PC-9 (cell line): ENCODE measurements at regions of chr22 and their contacts with region 1.

Region 1: GRCh38 chr22:36052505-36053270 is 24.1 kb upstream of the RBFOX2 start:
- DNase-seq: peak; percentile 84 to 99
- H3K4me3 ChIP-seq: peak overlapping the region; percentile 52
- H3K27ac ChIP-seq: peak overlapping the region; percentile 99
- H3K4me1 ChIP-seq: peaks cover 92% of the 10 kb centered on the region
- H3K27me3 ChIP-seq: no peaks in the 10 kb centered on the region
- CTCF ChIP-seq: no peak

Region 2: GRCh38 chr22:35367301-35367886 is 685.3 kb before region 1 on chr22:
- CTCF ChIA-PET with region 1: no interaction called
- POLR2A ChIA-PET with region 1: interaction called, 25 read pairs
- intact Hi-C with region 1: loop called (anchors 10 kb)
- DNase-seq: no peak
- H3K4me3 ChIP-seq: no peak overlapping the region
- H3K27ac ChIP-seq: no peak overlapping the region
- H3K4me1 ChIP-seq: peaks cover 50% of the 10 kb centered on the region
- H3K27me3 ChIP-seq: no peaks in the 10 kb centered on the region
- CTCF ChIP-seq: no peak

Region 3: GRCh38 chr22:35648066-35649025 is 404.3 kb before region 1 on chr22 and contains the start of gene APOL6:
- CTCF ChIA-PET with region 1: no interaction called
- POLR2A ChIA-PET with region 1: no interaction called
- intact Hi-C with region 1: no loop called
- DNase-seq: peak; percentile 48 to 88
- H3K4me3 ChIP-seq: peak within 1 kb of the TSS; percentile 80
- H3K27ac ChIP-seq: peak within 1 kb of the TSS; percentile 97
- H3K4me1 ChIP-seq: peaks cover 49% of the 10 kb centered on the region
- H3K27me3 ChIP-seq: no peaks in the 10 kb centered on the region
- CTCF ChIP-seq: no peak
- total RNA-seq, gene APOL6: 16.7 and 18.6 TPM in 2 replicates

Region 4: GRCh38 chr22:35971456-35972119 is 81.1 kb before region 1 on chr22:
- CTCF ChIA-PET with region 1: no interaction called
- POLR2A ChIA-PET with region 1: interaction called, 14 read pairs
- intact Hi-C with region 1: no loop called
- DNase-seq: no peak
- H3K4me3 ChIP-seq: no peak overlapping the region
- H3K27ac ChIP-seq: no peak overlapping the region
- H3K4me1 ChIP-seq: peaks cover 16% of the 10 kb centered on the region
- H3K27me3 ChIP-seq: no peaks in the 10 kb centered on the region
- CTCF ChIP-seq: no peak

Region 5: GRCh38 chr22:36073476-36073875 is 20.8 kb after region 1 on chr22:
- CTCF ChIA-PET with region 1: no interaction called
- POLR2A ChIA-PET with region 1: interaction called, 23 read pairs
- intact Hi-C with region 1: no loop called
- DNase-seq: no peak
- H3K4me3 ChIP-seq: no peak overlapping the region
- H3K27ac ChIP-seq: no peak overlapping the region
- H3K4me1 ChIP-seq: no peaks in the 10 kb centered on the region
- H3K27me3 ChIP-seq: no peaks in the 10 kb centered on the region
- CTCF ChIP-seq: no peak